ENCODE measurements at regions of chr7 and their contacts with region 1.

Region 1: GRCh38 chr7:110017412-110017811 is 1073.5 kb upstream of the LRRN3 start:
- DNase-seq: no peak
- H3K4me3 ChIP-seq: no peak overlapping the region
- H3K27ac ChIP-seq: no peak overlapping the region
- H3K4me1 ChIP-seq: no peaks in the 10 kb centered on the region
- H3K27me3 ChIP-seq: no peaks in the 10 kb centered on the region
- CTCF ChIP-seq: no peak
- EP300 ChIP-seq: no peak
- POLR2A ChIP-seq: no peak

Region 2: DNA sequence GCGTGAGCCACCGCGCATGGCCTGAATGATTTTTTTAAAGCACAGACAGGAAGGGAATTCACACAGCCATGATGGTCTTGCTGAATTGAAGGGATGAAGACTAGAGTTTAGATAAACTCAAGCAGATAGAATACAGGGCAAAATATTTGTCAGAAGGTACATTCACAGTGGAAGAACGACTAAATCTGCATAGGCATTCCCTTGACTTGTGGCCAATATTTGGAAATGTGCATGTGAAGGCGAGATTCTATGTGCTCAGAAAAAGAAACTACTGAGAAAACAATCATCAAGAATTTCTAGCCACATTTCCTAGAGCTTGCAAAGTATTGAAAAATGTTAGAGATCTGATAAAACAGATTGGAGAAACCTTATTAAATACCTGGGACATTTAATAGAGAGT is 281.5 kb before region 1 on chr7:
- in situ Hi-C with region 1: no loop called
- intact Hi-C with region 1: loop called (anchors 5 kb)
- DNase-seq: no peak
- H3K4me3 ChIP-seq: no peak overlapping the region
- H3K27ac ChIP-seq: no peak overlapping the region
- H3K4me1 ChIP-seq: no peaks in the 10 kb centered on the region
- H3K27me3 ChIP-seq: no peaks in the 10 kb centered on the region
- CTCF ChIP-seq: no peak
- EP300 ChIP-seq: no peak
- POLR2A ChIP-seq: no peak

Region 3: GRCh38 chr7:109879287-109879828 is 138.1 kb before region 1 on chr7:
- in situ Hi-C with region 1: no loop called
- intact Hi-C with region 1: no loop called
- DNase-seq: no peak
- H3K4me3 ChIP-seq: no peak overlapping the region
- H3K27ac ChIP-seq: no peak overlapping the region
- H3K4me1 ChIP-seq: no peaks in the 10 kb centered on the region
- H3K27me3 ChIP-seq: no peaks in the 10 kb centered on the region
- CTCF ChIP-seq: no peak
- EP300 ChIP-seq: no peak
- POLR2A ChIP-seq: no peak

Region 4: DNA sequence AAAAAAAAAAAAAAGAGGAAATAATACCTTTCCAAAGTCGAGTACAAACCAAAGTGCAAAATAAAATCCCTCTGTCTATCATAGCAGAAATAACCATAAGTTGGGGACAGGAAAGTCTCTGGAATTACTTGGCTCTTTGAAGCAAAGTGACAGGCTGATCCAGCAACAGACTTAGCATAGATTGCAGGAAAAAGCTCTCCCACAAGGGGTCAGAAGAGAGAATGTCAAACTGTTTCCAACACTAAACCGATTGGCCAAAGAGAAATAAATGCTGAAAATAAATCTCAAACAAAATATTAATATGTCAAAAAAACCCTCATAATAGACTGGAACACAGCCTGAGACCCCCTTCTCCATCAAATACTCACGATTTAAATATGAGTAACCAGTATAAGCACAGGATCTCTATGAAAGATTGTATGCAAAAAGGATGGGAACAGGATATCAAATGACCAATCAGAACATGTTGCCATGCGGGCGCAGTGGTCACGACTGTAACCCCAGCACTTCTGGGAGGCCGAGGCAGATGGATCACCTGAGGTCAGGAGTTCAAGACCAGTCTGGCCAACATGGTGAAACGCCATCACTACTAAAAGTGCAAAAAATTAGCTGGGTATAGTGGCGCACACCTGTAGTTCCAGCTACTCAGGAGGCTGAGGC is 72.8 kb after region 1 on chr7:
- in situ Hi-C with region 1: no loop called
- intact Hi-C with region 1: loop called (anchors 2 kb)
- DNase-seq: no peak
- H3K4me3 ChIP-seq: no peak overlapping the region
- H3K27ac ChIP-seq: no peak overlapping the region
- H3K4me1 ChIP-seq: no peaks in the 10 kb centered on the region
- H3K27me3 ChIP-seq: no peaks in the 10 kb centered on the region
- CTCF ChIP-seq: peak in 2 of 5 experiments; percentile 25 to 28
- EP300 ChIP-seq: no peak
- POLR2A ChIP-seq: no peak

Measured in transverse colon (tissue), 4 donors.